Activated CD4-positive, alpha-beta memory T cell treated with anti-CD3 and anti-CD28 coated beads, Interleukin-2, amount 10 ng/mL, durations not matched to agents 7 days and 5 days (primary cell): ENCODE measurements at regions of chr22 and their contacts with region 1.

Region 1: DNA sequence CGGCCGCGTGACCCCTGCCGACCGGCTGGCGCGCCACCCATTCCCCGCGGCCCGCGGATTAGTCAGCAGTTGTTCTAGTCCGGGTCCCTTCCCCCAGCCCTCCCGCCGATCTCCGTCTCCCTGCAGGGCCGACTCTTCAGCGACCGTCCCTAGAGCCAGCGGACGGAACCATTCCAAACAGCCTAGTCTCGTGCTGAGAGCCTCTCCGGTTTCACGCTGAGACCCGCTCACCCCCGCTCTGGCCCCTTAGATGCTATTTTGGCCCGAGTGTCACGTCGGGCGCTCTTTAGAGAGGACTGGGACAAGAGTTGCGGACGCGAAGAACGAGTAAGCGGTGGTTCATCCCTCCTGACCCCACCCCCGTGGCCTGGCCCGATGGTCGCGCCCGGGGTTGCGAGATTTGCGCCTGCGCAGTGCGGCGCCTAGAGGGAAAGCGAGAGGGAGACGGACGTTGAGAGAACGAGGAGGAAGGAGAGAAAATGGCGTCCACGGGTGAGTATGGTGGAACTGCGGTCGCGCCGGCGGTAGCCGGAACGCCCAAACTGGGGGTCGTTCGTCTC is at the starts of genes EWSR1 and RHBDD3:
- DNase-seq: peak; percentile 96
- H3K4me3 Mint-ChIP-seq: peak within 1 kb of the TSS; percentile 94
- H3K27ac Mint-ChIP-seq: peak within 1 kb of the TSS; percentile 95
- H3K4me1 Mint-ChIP-seq: peaks cover 43% of the 10 kb centered on the region
- H3K27me3 Mint-ChIP-seq: no peaks in the 10 kb centered on the region
- total RNA-seq, gene EWSR1: 308 to 311 TPM
- total RNA-seq, gene RHBDD3: 27.8 to 28.8 TPM

Region 2: DNA sequence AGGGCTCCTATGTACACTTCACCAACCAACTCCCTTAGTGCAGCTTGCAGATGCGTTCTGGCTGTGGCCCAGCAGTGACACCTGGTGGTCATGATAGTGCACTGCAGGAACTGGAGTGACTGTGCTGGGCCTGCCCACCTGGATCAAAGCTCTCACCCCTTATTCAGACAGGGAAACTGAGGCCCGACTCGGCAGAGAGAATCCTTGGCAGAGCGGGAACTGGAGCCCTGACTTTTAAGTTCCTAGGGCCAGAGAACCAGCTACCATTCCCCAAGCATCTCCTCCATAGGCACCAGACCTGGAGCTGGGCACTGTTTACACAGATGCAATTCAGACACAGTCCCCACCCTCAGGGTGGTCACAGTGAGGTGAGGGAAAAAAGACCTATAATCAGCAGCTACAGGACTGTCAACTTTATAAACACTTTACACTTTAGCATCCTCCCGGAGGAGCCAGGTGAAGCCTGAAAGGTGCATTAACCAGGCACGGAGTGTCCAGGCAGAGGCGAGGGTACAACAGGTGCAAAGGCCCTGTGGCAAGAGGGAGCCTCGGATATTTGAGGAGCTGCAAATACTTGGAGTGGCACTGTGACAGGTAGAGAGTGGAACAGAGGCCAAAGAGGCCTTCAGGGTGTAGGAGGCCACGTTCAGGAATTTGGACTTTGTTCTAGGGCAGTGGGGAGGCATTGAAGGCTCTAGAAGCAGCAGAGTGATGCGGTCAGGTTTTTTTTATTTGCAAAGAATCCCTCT is 22.1 kb before region 1 on chr22:
- CTCF ChIA-PET with region 1: no interaction called
- POLR2A ChIA-PET with region 1: no interaction called
- DNase-seq: peak; percentile 75
- H3K4me3 Mint-ChIP-seq: no peak overlapping the region
- H3K27ac Mint-ChIP-seq: no peak overlapping the region
- H3K4me1 Mint-ChIP-seq: peaks cover 1% of the 10 kb centered on the region
- H3K27me3 Mint-ChIP-seq: peaks cover 20% of the 10 kb centered on the region

Region 3: DNA sequence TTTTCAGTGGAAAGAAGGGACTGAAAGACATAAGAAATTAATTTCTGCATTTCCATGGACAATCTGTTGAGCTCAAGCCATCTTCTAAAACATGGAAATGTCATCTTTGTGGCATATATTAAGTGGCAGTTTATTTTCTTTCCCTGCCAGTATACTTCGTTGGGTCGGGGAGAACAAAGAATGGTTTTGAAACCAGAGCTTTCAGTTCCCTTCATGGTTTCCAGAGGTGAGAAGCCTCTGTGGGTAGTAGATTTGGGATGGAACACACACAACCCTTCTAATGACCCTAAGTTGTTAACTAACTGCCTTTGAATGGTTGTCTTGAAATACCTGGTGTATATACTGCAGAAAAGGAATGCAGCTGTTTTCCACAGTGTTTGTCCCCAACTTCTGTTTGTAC is 20.9 kb after region 1 on chr22:
- CTCF ChIA-PET with region 1: no interaction called
- POLR2A ChIA-PET with region 1: interaction called, 28 read pairs
- DNase-seq: no peak
- H3K4me3 Mint-ChIP-seq: no peak overlapping the region
- H3K27ac Mint-ChIP-seq: no peak overlapping the region
- H3K4me1 Mint-ChIP-seq: peaks cover 12% of the 10 kb centered on the region
- H3K27me3 Mint-ChIP-seq: no peaks in the 10 kb centered on the region